WTC11 (cell line): ENCODE measurements at regions of chr12 and their contacts with region 1.

Region 1: GRCh38 chr12:3135522-3136461 is 58.6 kb downstream of the TSPAN9 start:
- DNase-seq: peak; percentile 64
- ATAC-seq: peak; percentile 72
- H3K4me3 Mint-ChIP-seq: no peak overlapping the region
- H3K27ac Mint-ChIP-seq: no peak overlapping the region
- H3K4me1 Mint-ChIP-seq: peaks cover 61% of the 10 kb centered on the region
- H3K27me3 Mint-ChIP-seq: no peaks in the 10 kb centered on the region
- CTCF ChIP-seq: peak; percentile 82

Region 2: GRCh38 chr12:3055704-3056685 is 79.8 kb before region 1 on chr12:
- CTCF ChIA-PET with region 1: no interaction called
- POLR2A ChIA-PET with region 1: no interaction called
- DNase-seq: no peak
- ATAC-seq: peak; percentile 80
- H3K4me3 Mint-ChIP-seq: no peak overlapping the region
- H3K27ac Mint-ChIP-seq: no peak overlapping the region
- H3K4me1 Mint-ChIP-seq: peaks cover 10% of the 10 kb centered on the region
- H3K27me3 Mint-ChIP-seq: no peaks in the 10 kb centered on the region
- CTCF ChIP-seq: no peak

Region 3: GRCh38 chr12:3097186-3097804 is 38.5 kb before region 1 on chr12:
- CTCF ChIA-PET with region 1: no interaction called
- POLR2A ChIA-PET with region 1: no interaction called
- DNase-seq: no peak
- ATAC-seq: peak; percentile 24; the same call in 1 of the 2 replicates
- H3K4me3 Mint-ChIP-seq: no peak overlapping the region
- H3K27ac Mint-ChIP-seq: peak overlapping the region; percentile 56
- H3K4me1 Mint-ChIP-seq: peaks cover 9% of the 10 kb centered on the region
- H3K27me3 Mint-ChIP-seq: no peaks in the 10 kb centered on the region; the same call in 1 of the 2 replicates
- CTCF ChIP-seq: no peak

Region 4: GRCh38 chr12:3122835-3123678 is 12.7 kb before region 1 on chr12:
- CTCF ChIA-PET with region 1: interaction called, 19 read pairs
- POLR2A ChIA-PET with region 1: no interaction called
- DNase-seq: peak; percentile 13
- ATAC-seq: peak; percentile 56
- H3K4me3 Mint-ChIP-seq: no peak overlapping the region
- H3K27ac Mint-ChIP-seq: no peak overlapping the region; the same call in 1 of the 2 replicates
- H3K4me1 Mint-ChIP-seq: peaks cover 5% of the 10 kb centered on the region
- H3K27me3 Mint-ChIP-seq: no peaks in the 10 kb centered on the region; the same call in 1 of the 2 replicates
- CTCF ChIP-seq: no peak

Region 5: GRCh38 chr12:3150931-3151835 is 15.4 kb after region 1 on chr12:
- CTCF ChIA-PET with region 1: interaction called, 21 read pairs
- POLR2A ChIA-PET with region 1: no interaction called
- DNase-seq: peak; percentile 44
- ATAC-seq: peak; percentile 73
- H3K4me3 Mint-ChIP-seq: peak overlapping the region; percentile 15; the same call in 1 of the 2 replicates
- H3K27ac Mint-ChIP-seq: peak overlapping the region; percentile 88
- H3K4me1 Mint-ChIP-seq: peaks cover 67% of the 10 kb centered on the region
- H3K27me3 Mint-ChIP-seq: no peaks in the 10 kb centered on the region
- CTCF ChIP-seq: no peak

Region 6: DNA sequence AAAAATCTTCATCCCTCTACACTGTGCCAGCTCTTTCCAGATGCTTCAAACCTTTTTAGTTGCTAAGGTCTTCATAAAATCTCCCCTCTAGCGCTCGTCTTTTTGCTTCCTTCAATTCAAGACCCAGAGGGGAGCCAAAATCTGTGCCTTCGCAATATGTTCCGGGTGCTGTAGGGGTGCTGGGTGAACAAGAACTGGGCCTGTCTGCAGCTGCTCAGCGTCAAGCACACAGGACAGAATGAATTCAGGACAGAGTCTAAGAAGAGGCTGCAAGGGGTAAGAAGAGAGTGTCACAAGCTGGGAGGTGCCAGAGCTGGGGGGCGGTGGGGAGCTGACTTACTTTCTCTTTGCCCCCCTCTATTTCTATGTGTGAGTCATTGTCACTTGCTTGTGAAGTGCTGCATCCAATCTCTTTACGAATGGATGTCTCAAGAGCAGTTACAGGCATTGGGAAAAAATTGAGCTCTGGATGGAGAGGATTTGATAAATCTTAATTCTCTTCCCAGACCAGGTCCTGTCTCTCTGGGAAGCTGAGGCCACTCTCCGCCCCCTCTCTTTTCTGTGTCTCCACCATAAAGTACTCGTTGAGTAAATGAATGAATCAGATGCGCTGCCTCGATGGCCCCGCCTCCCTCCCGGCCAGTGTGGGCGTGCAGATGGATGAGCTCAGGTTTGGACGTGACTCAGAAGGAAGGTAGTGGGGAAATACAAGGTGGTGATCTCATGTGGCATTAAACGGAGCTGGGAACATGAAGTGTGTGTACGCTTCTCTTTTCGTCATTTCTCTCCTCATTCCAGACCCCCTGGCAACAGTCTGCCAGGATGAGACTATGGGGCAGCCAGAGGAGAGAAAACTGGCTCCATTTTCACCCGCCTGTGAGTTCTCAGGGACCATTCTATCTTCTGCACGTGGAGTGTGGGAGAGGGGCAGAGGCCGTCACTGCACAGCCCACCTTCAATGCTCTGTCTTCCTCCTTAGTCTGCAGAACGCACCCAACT is 32.7 kb after region 1 on chr12:
- CTCF ChIA-PET with region 1: interaction called, 22 read pairs
- POLR2A ChIA-PET with region 1: no interaction called
- DNase-seq: no peak
- ATAC-seq: no peak; the same call in 1 of the 2 replicates
- H3K4me3 Mint-ChIP-seq: no peak overlapping the region
- H3K27ac Mint-ChIP-seq: no peak overlapping the region
- H3K4me1 Mint-ChIP-seq: peaks cover 68% of the 10 kb centered on the region
- H3K27me3 Mint-ChIP-seq: no peaks in the 10 kb centered on the region
- CTCF ChIP-seq: no peak

Region 7: GRCh38 chr12:3186546-3187215 is 50.9 kb after region 1 on chr12:
- CTCF ChIA-PET with region 1: interaction called, 15 read pairs
- POLR2A ChIA-PET with region 1: no interaction called
- DNase-seq: no peak
- ATAC-seq: no peak
- H3K4me3 Mint-ChIP-seq: no peak overlapping the region
- H3K27ac Mint-ChIP-seq: no peak overlapping the region
- H3K4me1 Mint-ChIP-seq: peaks cover 28% of the 10 kb centered on the region
- H3K27me3 Mint-ChIP-seq: no peaks in the 10 kb centered on the region
- CTCF ChIP-seq: no peak

Region 8: GRCh38 chr12:3218228-3219171 is 82.7 kb after region 1 on chr12:
- CTCF ChIA-PET with region 1: interaction called, 20 read pairs
- POLR2A ChIA-PET with region 1: no interaction called
- DNase-seq: no peak
- ATAC-seq: no peak
- H3K4me3 Mint-ChIP-seq: no peak overlapping the region
- H3K27ac Mint-ChIP-seq: peak overlapping the region; percentile 51
- H3K4me1 Mint-ChIP-seq: peaks cover 20% of the 10 kb centered on the region
- H3K27me3 Mint-ChIP-seq: no peaks in the 10 kb centered on the region
- CTCF ChIP-seq: no peak

Region 9: GRCh38 chr12:3333583-3333982 is 197.8 kb after region 1 on chr12:
- CTCF ChIA-PET with region 1: no interaction called
- POLR2A ChIA-PET with region 1: no interaction called
- DNase-seq: peak; percentile 90
- ATAC-seq: peak; percentile 97
- H3K4me3 Mint-ChIP-seq: no peak overlapping the region
- H3K27ac Mint-ChIP-seq: no peak overlapping the region
- H3K4me1 Mint-ChIP-seq: peaks cover 24% of the 10 kb centered on the region
- H3K27me3 Mint-ChIP-seq: no peaks in the 10 kb centered on the region; the same call in 1 of the 2 replicates
- CTCF ChIP-seq: peak; percentile 29; the same call in 1 of the 2 replicates